AG04450 (cell line): ENCODE measurements at regions of chr12 and their contacts with region 1.

Region 1: DNA sequence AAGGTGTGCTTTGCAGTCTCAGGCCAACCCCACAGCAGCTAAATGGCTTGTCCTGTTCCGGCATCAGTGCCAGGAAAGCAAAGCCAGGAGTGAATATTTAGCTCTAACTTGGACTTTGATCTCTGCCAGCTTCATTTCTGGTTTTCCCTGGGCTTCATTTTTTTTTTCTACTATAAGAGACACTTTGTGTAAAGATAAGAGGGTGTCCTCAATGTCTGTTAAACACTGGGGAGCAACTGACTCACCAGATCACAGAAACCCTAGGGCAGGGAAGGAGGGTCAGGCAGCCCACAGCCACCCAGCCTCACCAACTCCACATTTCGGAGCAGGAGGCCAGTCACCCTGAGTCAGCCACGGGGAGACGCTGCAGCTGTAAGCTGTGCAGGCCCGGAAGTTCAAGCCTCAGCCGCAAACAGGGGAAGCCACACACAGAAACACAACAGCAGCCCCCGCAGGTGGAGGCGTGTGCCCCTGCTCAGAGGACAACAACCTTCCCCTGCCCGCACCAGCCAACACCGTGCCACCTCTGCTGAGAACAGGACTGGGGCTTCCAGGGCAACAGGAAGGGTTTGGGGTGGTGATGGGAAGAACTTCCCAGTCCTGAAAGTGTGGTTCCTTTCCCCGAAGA is 6.3 kb downstream of the TNFRSF1A start:
- DNase-seq: peak; percentile 53
- H3K4me3 ChIP-seq: peak overlapping the region; percentile 58
- H3K27ac ChIP-seq: peak overlapping the region; percentile 100
- H3K27me3 ChIP-seq: no peaks in the 10 kb centered on the region
- CTCF ChIP-seq: peak; percentile 53

Region 2: DNA sequence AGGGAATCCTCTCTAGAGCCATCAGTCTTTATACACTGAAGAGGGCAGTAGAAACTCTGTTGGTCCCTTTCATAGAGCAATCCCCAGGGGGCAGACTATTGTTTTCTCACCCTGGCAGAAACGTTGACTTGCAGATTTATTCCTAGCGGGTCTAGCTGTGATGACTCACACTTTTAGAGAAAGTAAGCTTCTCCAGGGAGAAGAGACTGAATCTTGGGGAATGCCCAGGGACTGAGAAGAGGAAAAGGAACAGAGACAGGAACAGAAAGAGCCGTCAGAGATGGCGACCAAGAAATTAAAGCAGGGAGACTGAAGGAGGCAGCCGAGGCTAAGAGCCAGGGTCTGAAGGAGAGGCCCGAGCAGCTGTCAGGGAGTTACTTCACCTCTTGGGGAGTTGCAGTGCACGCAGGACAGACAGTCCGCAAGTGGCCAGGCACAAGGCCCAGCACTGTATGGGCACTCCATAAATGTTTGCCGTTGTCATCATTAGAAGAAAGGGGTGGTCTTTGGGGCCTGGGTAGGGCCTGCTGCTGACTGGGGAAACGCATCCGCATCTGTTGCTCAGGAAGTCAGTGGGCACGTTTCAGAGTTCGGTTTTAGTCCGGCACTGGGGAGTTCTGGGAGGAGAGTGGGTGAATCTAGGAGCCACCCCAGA is 12.1 kb before region 1 on chr12:
- CTCF ChIA-PET with region 1: interaction called, 14 read pairs
- POLR2A ChIA-PET with region 1: interaction called, 20 read pairs
- DNase-seq: peak; percentile 79
- H3K4me3 ChIP-seq: no peak overlapping the region
- H3K27ac ChIP-seq: peak overlapping the region; percentile 90
- H3K27me3 ChIP-seq: no peaks in the 10 kb centered on the region
- CTCF ChIP-seq: peak; percentile 77

Region 3: GRCh38 chr12:6372403-6373003 is 36.9 kb after region 1 on chr12:
- CTCF ChIA-PET with region 1: interaction called, 6 read pairs
- POLR2A ChIA-PET with region 1: interaction called, 13 read pairs
- DNase-seq: no peak
- H3K4me3 ChIP-seq: no peak overlapping the region
- H3K27ac ChIP-seq: peak overlapping the region; percentile 68
- H3K27me3 ChIP-seq: no peaks in the 10 kb centered on the region
- CTCF ChIP-seq: peak; percentile 10; the same call in 1 of the 2 replicates

Region 4: GRCh38 chr12:6383572-6384498 is 48.3 kb after region 1 on chr12 and contains the start of gene LTBR:
- CTCF ChIA-PET with region 1: no interaction called
- POLR2A ChIA-PET with region 1: interaction called, 50 read pairs
- DNase-seq: peak; percentile 76
- H3K4me3 ChIP-seq: peak within 1 kb of the TSS; percentile 72
- H3K27ac ChIP-seq: peak within 1 kb of the TSS; percentile 94
- H3K27me3 ChIP-seq: no peaks in the 10 kb centered on the region
- CTCF ChIP-seq: 0 out of 2 replicates have a peak, but pooled peaks have one; percentile 12
- polyA plus RNA-seq, gene LTBR: 32.1 and 38.8 TPM in 2 replicates